ENCODE measurements at regions of chr1 and their contacts with region 1.

Region 1: DNA sequence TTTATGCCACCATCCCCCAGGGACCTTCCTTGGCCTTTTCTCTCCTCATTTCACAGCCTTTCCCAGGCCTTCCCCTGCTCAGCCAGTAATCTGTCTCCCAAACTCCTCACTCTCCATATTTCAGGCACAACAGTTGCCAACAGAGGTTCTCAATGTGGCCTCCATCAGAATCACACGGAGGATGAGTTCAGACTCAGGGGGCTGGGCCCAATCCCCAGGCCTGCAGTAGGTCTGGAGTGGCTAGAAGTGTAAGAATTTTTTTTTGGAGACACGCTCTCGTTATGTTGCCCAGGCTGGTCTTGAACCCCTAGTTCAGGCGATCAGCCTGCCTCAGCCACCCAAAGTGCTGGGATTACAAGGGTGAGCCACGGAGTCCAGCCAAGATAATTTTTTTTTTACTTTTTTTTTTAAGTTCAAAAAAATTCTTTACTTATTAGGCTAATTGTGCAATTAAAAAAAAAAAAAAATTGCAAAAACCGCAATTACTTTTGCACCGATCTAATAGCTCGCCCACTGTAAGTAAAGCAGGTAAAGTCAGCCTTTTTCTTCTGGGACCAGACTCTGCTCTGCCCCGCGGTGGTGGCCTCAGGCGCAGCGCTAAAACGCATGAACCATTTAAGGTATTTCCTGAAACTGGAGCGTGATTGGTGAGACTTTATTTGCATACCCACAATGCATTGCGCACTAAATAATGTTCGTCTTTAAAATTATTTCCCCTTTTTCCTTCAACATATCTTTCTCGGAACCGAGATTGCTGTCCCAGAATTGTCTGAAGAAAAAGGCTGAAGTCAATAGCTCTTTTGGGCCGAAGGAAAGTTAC is 18.7 kb downstream of the KIAA2013 start:
- DNase-seq: peak; percentile 95
- ATAC-seq: peak; percentile 55
- H3K4me3 ChIP-seq: peak overlapping the region; percentile 77 to 85 (median 83)
- H3K4me3 Mint-ChIP-seq: peak overlapping the region; percentile 95
- H3K27ac ChIP-seq: peak overlapping the region; percentile 99 to 100
- H3K27ac Mint-ChIP-seq: peak overlapping the region; percentile 99
- H3K4me1 ChIP-seq: peaks cover 3 to 11% of the 10 kb centered on the region in 2 donors
- H3K4me1 Mint-ChIP-seq: peaks cover 28% of the 10 kb centered on the region
- H3K27me3 ChIP-seq: no peaks in the 10 kb centered on the region
- H3K27me3 Mint-ChIP-seq: no peaks in the 10 kb centered on the region
- CTCF ChIP-seq: peak; percentile 80

Region 2: DNA sequence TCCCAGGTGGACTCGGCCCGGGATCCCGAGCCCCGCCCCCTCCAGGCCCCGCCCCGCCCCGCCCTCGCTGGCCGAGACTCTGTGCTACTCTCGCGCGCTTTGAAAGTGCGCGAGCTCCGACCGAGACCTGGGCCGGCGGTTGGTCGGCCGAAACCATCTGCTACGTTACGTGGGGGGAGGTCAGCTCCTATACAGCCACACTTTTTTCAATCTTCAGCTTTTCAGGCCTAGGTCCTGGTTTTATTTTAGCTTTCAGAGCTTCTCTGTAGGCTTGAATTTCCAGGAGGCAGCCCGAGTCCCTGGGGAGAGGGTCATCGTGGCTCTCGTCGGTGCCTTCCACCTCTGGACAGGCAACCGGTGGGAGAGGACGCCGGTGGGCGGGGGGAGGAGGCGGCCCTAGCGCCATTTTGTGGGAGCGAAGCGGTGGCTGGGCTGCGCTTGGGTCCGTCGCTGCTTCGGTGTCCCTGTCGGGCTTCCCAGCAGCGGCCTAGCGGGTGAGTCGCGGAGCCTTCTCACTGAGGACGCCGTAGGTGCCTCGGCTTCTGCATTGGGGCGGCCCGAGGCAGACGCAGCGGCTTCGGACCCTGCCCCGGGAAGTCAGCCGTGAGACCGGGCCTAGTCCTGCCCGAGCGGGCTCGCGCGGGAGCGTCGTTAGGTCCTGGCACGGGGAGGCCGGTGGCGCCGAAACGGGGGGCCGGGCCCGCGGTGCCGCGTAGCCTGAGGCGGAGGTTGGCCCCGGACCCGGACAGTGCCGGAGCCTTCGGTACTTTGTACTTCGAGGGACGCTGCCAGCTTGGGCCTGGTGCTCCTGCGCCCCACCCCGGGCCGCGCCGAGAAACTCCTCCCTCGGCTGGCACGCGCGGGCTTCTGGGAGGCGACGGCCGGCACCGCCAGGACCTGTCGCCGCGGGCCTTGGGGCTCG is 895.0 kb before region 1 on chr1 and contains the start of gene TARDBP:
- CTCF ChIA-PET with region 1: no interaction called
- POLR2A ChIA-PET with region 1: interaction called, 7 read pairs
- intact Hi-C with region 1: loop called (anchors 2 kb)
- DNase-seq: peak; percentile 98
- ATAC-seq: peak; percentile 88
- H3K4me3 ChIP-seq: peak within 1 kb of the TSS; percentile 81 to 97 (median 95)
- H3K4me3 Mint-ChIP-seq: peak within 1 kb of the TSS; percentile 86
- H3K27ac ChIP-seq: peak within 1 kb of the TSS; percentile 98 to 99
- H3K27ac Mint-ChIP-seq: peak within 1 kb of the TSS; percentile 99
- H3K4me1 ChIP-seq: peaks cover 15 to 26% of the 10 kb centered on the region in 2 donors
- H3K4me1 Mint-ChIP-seq: peaks cover 29% of the 10 kb centered on the region
- H3K27me3 ChIP-seq: no peaks in the 10 kb centered on the region
- H3K27me3 Mint-ChIP-seq: no peaks in the 10 kb centered on the region
- CTCF ChIP-seq: no peak
- total RNA-seq, gene TARDBP: 222 and 226 TPM in 2 replicates

Region 3: DNA sequence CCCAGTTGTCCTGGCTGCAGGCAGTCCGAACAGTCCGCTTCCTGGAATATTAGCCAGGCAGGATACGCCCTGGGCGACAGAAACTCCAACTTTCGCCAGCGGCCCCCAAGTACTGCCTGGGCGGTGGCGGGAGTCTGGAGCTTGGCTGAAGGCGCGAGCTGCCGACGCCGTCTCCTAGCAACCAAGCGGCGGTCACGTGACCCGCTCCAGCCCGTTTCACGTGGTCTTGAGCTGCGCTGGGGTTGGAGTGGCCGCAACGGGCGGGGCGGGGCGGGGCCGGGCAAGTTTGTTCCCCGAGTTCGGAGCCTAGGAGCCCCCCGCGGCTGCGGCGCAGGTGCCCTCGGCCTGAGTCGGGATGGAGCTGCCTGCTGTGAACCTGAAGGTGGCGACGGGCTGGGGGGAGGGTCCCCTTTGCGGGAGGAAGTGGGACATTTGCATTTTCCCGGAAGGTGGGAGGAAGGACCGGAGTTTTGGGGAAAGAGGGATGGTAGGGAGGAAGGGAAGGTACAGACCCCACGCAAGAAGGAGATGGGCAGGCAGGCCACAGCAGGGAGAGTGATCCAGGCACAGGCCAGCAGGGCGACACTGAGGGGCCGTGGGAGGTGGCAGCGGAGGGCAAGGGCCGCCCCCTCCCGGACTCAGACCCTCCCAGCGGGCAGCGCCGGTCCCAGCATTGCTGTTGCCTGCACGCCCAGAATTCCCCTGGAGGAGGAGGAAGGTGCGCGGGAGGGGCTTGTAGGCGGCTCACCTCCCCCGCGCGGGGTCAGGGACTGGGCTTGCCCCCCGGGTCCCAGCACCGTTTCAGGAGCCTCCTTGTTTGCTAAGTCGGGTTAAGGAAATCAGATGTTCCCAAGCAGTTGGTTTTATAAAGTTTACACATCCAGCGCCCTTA is 171.4 kb before region 1 on chr1 and contains the start of gene AGTRAP:
- CTCF ChIA-PET with region 1: no interaction called
- POLR2A ChIA-PET with region 1: interaction called, 17 read pairs
- intact Hi-C with region 1: no loop called
- DNase-seq: peak; percentile 94
- ATAC-seq: peak; percentile 90
- H3K4me3 ChIP-seq: peak within 1 kb of the TSS; percentile 67 to 99 (median 98)
- H3K4me3 Mint-ChIP-seq: peak within 1 kb of the TSS; percentile 97
- H3K27ac ChIP-seq: peak within 1 kb of the TSS; percentile 14 to 83
- H3K27ac Mint-ChIP-seq: peak within 1 kb of the TSS; percentile 93
- H3K4me1 ChIP-seq: peaks cover 33 to 42% of the 10 kb centered on the region in 2 donors
- H3K4me1 Mint-ChIP-seq: peaks cover 42% of the 10 kb centered on the region
- H3K27me3 ChIP-seq: no peaks in the 10 kb centered on the region
- H3K27me3 Mint-ChIP-seq: no peaks in the 10 kb centered on the region
- CTCF ChIP-seq: no peak
- total RNA-seq, gene AGTRAP: 18.3 and 20.2 TPM in 2 replicates

Region 4: DNA sequence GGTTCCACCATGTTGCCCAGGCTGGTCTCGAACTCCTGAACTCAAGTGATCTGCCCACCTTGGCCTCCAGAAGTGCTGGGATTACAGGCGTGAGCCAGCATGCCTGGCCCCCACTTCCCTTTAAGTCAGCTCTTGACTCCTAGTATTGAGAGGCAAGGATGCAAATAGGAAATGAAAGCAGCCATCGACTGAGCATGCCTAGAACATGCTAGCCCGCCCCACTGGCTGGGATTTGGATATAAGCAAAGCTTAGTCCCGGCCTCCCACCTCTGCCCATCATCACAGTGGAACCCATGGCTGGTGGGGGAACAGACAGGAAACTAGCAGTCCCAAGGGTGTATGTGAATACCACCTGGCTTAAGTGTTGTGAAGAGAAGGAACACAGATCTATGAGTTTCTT is 135.0 kb before region 1 on chr1:
- CTCF ChIA-PET with region 1: no interaction called
- POLR2A ChIA-PET with region 1: no interaction called
- intact Hi-C with region 1: no loop called
- DNase-seq: no peak
- ATAC-seq: no peak
- H3K4me3 ChIP-seq: no peak overlapping the region
- H3K4me3 Mint-ChIP-seq: no peak overlapping the region
- H3K27ac ChIP-seq: no peak overlapping the region
- H3K27ac Mint-ChIP-seq: no peak overlapping the region
- H3K4me1 ChIP-seq: no peaks in the 10 kb centered on the region
- H3K4me1 Mint-ChIP-seq: peaks cover 3% of the 10 kb centered on the region
- H3K27me3 ChIP-seq: no peaks in the 10 kb centered on the region
- H3K27me3 Mint-ChIP-seq: peaks cover 6% of the 10 kb centered on the region
- CTCF ChIP-seq: no peak

Region 5: DNA sequence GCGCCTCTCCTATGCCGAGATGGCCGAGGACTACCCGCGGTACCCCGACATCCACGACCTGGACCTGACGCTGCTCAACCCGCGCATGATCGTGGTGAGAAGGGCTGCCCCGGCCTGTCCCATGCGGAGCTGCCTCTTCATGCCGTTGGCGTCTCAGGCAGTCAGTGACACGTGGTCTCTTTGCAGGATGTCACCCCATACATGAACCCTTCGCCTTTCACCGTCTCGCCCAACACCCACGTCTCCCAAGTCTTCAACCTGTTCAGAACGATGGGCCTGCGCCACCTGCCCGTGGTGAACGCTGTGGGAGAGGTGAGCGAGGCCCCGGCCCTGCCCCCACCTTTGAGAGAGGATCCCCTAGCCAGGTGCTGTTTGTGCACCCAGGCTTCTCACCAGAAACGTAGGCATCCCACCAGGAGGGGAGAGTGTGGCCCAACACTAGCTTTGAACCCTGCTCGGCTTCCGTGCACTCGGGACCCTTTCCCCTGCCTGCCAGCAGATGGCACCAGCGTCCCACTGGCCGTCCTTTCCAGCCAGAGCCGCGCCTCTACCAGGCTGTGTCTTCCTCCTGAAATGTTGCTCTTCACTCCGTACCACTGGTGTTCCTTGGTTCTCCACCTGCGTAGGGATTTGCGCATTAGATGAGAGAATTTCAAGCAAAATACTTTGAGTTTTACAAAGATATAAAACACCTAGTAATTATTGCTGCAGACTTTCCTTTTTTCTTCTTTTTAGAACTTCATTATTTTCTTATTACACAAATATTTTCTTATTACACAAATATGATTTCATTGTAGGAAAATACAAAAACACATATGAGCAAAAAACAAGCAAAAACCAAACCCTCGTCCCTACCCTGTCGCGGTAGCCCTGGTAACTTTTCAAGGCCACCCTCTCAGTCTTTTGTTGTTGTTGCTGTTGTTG is 68.9 kb before region 1 on chr1:
- CTCF ChIA-PET with region 1: interaction called, 14 read pairs
- POLR2A ChIA-PET with region 1: interaction called, 6 read pairs
- intact Hi-C with region 1: loop called (anchors 1 kb)
- DNase-seq: peak; percentile 74
- ATAC-seq: peak; percentile 84
- H3K4me3 ChIP-seq: no peak overlapping the region
- H3K4me3 Mint-ChIP-seq: no peak overlapping the region
- H3K27ac ChIP-seq: no peak overlapping the region
- H3K27ac Mint-ChIP-seq: peak overlapping the region; percentile 23
- H3K4me1 ChIP-seq: peaks cover 14 to 22% of the 10 kb centered on the region in 2 donors
- H3K4me1 Mint-ChIP-seq: peaks cover 27% of the 10 kb centered on the region
- H3K27me3 ChIP-seq: no peaks in the 10 kb centered on the region
- H3K27me3 Mint-ChIP-seq: no peaks in the 10 kb centered on the region
- CTCF ChIP-seq: peak; percentile 98

Region 6: DNA sequence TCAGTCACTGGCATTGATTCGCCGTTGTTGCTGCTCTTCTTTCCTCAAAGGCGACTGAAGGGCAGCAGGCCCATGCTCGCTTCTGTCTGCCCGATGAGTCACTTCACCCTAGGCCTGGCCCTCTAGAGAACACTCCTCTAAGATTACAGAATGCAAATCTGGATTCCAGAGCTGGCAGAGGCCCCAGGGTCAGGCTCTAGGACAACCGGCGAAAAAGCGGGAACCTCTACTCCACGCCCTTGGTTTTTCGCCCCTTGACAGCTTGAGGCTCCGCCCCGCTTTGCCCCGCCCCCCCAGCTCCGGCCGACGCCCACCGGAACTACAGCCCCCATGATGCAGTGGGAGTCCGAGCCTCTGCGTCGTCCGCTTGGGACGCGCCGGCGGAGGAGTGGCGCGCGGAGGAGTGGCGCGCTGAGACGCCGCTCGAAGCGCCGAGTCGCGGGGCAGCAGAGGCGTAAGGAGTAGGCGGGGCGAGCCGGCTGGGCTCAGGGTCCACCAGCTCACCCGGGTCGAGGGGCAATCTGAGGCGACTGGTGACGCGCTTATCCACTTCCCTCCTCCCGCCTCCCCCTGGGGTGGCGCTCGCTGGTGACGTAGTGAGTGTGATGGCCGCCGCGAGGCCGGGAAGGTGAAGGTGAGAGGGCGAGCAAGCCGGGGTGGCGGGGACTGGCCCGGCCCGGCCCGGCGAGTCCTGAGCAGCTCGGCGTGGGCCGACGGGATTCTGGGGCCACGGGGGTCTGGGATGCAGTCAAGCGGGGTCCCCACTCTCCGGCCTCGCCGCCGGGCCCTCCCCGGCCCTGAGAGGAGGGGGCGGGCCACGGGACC is 72.6 kb after region 1 on chr1 and contains the start of gene MFN2:
- CTCF ChIA-PET with region 1: interaction called, 5 read pairs
- POLR2A ChIA-PET with region 1: interaction called, 27 read pairs
- intact Hi-C with region 1: no loop called
- DNase-seq: peak; percentile 98
- ATAC-seq: peak; percentile 91
- H3K4me3 ChIP-seq: peak within 1 kb of the TSS; percentile 66 to 86 (median 81)
- H3K4me3 Mint-ChIP-seq: peak within 1 kb of the TSS; percentile 95
- H3K27ac ChIP-seq: peak within 1 kb of the TSS; percentile 81 to 94
- H3K27ac Mint-ChIP-seq: peak within 1 kb of the TSS; percentile 95
- H3K4me1 ChIP-seq: peaks cover 12 to 16% of the 10 kb centered on the region in 2 donors
- H3K4me1 Mint-ChIP-seq: peaks cover 40% of the 10 kb centered on the region
- H3K27me3 ChIP-seq: no peaks in the 10 kb centered on the region
- H3K27me3 Mint-ChIP-seq: no peaks in the 10 kb centered on the region
- CTCF ChIP-seq: no peak
- total RNA-seq, gene MFN2: 41.7 and 50.0 TPM in 2 replicates

Region 7: DNA sequence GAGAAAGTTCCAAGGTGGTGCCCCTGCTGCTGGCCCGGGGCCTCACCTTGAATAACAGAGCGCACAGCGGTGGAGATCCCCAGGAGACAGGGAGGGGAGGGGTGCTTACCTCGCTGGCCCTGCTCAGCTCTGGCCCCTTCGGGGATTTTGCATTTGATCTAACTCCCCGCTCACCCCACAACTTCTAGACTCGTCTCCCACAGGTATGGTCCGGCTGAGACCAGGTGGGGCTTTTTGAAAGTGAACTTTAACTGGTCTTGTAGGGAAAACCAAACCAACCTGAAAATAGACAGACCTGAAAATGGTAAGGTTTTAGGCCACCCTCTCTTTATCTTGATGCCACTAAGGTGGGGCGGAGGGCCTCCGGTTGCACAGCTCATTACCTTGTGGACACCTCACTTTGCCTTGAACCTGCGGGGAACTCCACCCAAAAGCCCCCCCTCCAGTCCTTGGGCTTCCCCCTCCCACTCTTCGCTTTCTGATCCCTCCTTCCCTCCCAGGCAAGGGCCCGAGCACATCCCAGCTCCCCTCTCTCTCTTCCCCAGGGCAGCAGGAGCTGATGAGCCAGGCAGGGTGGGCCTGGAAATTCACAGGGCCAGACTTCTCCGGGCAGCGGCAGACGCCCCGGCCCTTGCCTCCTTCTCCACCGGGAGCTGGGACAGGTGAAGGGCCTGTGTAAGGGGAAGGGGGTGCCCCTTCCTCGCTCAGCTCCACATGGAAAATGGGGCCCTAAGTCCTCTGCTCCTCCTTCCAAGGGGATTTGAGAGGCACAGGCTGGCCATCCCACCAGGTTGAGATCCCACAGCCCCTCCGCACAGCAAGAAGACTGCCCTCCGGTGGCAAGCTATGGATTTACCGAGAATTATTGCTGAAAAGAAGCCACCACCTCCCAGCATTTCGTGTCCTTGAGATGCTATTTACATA is 171.7 kb after region 1 on chr1:
- CTCF ChIA-PET with region 1: interaction called, 3 read pairs
- POLR2A ChIA-PET with region 1: interaction called, 16 read pairs
- intact Hi-C with region 1: no loop called
- DNase-seq: peak; percentile 67
- ATAC-seq: peak; percentile 63
- H3K4me3 ChIP-seq: peak overlapping the region in 4 of 5 experiments; percentile 1 to 28 (median 15)
- H3K4me3 Mint-ChIP-seq: peak overlapping the region; percentile 79
- H3K27ac ChIP-seq: peak overlapping the region; percentile 5 to 51
- H3K27ac Mint-ChIP-seq: peak overlapping the region; percentile 69
- H3K4me1 ChIP-seq: peaks cover 15 to 32% of the 10 kb centered on the region in 2 donors
- H3K4me1 Mint-ChIP-seq: peaks cover 30% of the 10 kb centered on the region
- H3K27me3 ChIP-seq: peaks cover 0 to 4% (median under 1%) of the 10 kb centered on the region in 4 experiments
- H3K27me3 Mint-ChIP-seq: peaks cover 4% of the 10 kb centered on the region
- CTCF ChIP-seq: peak; percentile 72